HepG2 (cell line): ENCODE measurements at regions of chr6 and their contacts with region 1.

Region 1: GRCh38 chr6:30800871-30801270 is 56.5 kb upstream of the IER3 start:
- DNase-seq: no peak
- ATAC-seq: no peak
- H3K4me3 ChIP-seq: no peak overlapping the region
- H3K27ac ChIP-seq: peak overlapping the region; percentile 10
- H3K4me1 ChIP-seq: peaks cover 71% of the 10 kb centered on the region
- H3K27me3 ChIP-seq: no peaks in the 10 kb centered on the region
- CTCF ChIP-seq: no peak
- EP300 ChIP-seq: no peak; a peak in 1 of 4 replicates
- POLR2A ChIP-seq: no peak
- RAD21 ChIP-seq: no peak

Region 2: GRCh38 chr6:30787954-30788353 is 12.9 kb before region 1 on chr6:
- CTCF ChIA-PET with region 1: no interaction called
- POLR2A ChIA-PET with region 1: no interaction called
- in situ Hi-C with region 1: no loop called
- intact Hi-C with region 1: loop called (anchors 1 kb)
- DNase-seq: peak; percentile 88
- ATAC-seq: peak; percentile 88
- H3K4me3 ChIP-seq: no peak overlapping the region
- H3K27ac ChIP-seq: peak overlapping the region; percentile 53
- H3K4me1 ChIP-seq: peaks cover 71% of the 10 kb centered on the region
- H3K27me3 ChIP-seq: no peaks in the 10 kb centered on the region
- CTCF ChIP-seq: no peak
- EP300 ChIP-seq: peak; percentile 43 to 70; a peak in 2 of 4 replicates
- POLR2A ChIP-seq: no peak
- RAD21 ChIP-seq: no peak

Region 3: GRCh38 chr6:30844091-30844535 is 43.2 kb after region 1 on chr6:
- CTCF ChIA-PET with region 1: no interaction called
- POLR2A ChIA-PET with region 1: no interaction called
- in situ Hi-C with region 1: no loop called
- intact Hi-C with region 1: no loop called
- DNase-seq: peak; percentile 40
- ATAC-seq: peak; percentile 70
- H3K4me3 ChIP-seq: no peak overlapping the region
- H3K27ac ChIP-seq: no peak overlapping the region
- H3K4me1 ChIP-seq: peaks cover 29% of the 10 kb centered on the region
- H3K27me3 ChIP-seq: peaks cover 0 to 23% of the 10 kb centered on the region in 2 experiments; a peak in 3 of 5 replicates
- CTCF ChIP-seq: peak; percentile 34; the same call in 1 of the 2 replicates
- EP300 ChIP-seq: no peak
- POLR2A ChIP-seq: no peak
- RAD21 ChIP-seq: no peak

Region 4: DNA sequence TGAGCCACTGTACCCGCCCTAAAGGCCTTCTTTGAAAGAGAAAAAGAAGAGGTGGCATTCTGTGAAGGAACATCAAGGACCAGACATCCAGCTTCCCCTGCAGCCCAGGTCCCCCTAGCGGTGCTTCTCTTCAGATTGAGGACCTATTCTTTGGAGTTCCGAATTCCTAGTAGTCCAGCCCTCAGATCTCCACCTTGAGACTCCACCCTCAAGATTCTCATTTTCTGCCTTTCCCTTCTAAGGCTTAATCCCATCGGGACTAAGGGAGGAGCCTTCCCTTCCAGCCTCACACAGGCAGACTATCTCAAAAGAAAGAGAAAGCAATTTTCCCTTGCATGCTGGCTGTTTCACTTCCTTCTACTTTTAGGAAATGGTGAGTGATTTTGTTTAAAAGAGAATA is 241.9 kb after region 1 on chr6:
- CTCF ChIA-PET with region 1: no interaction called
- POLR2A ChIA-PET with region 1: no interaction called
- in situ Hi-C with region 1: no loop called
- intact Hi-C with region 1: no loop called
- DNase-seq: peak; percentile 56
- ATAC-seq: peak; percentile 64
- H3K4me3 ChIP-seq: no peak overlapping the region
- H3K27ac ChIP-seq: no peak overlapping the region
- H3K4me1 ChIP-seq: peaks cover 12% of the 10 kb centered on the region
- H3K27me3 ChIP-seq: peaks cover 0 to 26% of the 10 kb centered on the region in 2 experiments; a peak in 3 of 5 replicates
- CTCF ChIP-seq: peak; percentile 75
- EP300 ChIP-seq: no peak
- POLR2A ChIP-seq: no peak
- RAD21 ChIP-seq: 0 out of 2 replicates have a peak, but pooled peaks have one; percentile 48